IMR-90 (cell line): ENCODE measurements at regions of chr19 and their contacts with region 1.

Region 1: DNA sequence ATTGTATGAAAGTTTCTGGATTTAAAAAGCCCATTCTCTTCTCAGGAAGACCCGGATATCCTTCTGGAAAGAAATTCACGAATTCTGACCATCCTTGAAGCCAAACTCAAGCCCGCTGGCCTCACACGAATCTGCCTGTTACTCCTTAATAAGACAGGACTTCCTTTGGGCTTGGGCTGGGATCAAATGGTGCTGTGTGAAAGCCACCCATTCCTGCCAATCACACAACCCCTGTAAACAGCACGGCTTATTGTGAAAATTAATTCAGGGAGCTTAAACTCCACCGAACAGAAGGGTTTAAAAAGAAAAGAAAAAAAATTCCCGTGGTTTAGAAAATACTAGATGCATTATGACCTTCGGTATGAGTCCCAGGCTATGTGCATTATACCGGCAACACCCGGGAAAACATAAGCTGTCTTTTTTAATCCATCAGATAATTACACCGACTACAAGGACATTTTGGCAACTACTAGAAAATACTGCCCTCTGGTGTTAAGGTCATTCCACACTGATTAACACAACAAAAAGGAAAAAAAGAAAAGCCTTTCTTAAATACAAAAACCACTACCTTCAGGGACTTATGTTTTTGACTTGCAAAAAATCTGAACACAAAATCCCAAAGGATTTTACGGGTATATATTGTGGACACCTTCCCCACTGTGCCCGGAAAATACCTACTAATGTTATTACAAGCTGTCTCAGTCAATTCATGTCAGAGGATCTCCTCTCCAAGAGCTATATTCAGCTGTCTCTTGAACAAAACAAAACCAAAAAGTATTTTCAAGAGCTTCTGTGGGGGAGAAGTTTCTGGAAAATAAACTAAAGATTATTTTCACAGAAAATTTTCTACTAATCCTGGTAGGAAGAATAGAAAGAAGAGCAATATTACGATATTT is 76.0 kb upstream of the LSM14A start:
- DNase-seq: peak; percentile 50
- ATAC-seq: peak; percentile 64
- H3K4me3 ChIP-seq: no peak overlapping the region
- H3K27ac ChIP-seq: no peak overlapping the region
- H3K4me1 ChIP-seq: no peaks in the 10 kb centered on the region
- H3K27me3 ChIP-seq: peaks cover 14% of the 10 kb centered on the region
- CTCF ChIP-seq: peak; percentile 71
- POLR2A ChIP-seq: no peak
- RAD21 ChIP-seq: peak; percentile 66

Region 2: GRCh38 chr19:34041925-34042521 is 54.2 kb before region 1 on chr19:
- CTCF ChIA-PET with region 1: interaction called, 31 read pairs
- POLR2A ChIA-PET with region 1: no interaction called
- dilution Hi-C with region 1: no loop called
- in situ Hi-C with region 1: no loop called
- intact Hi-C with region 1: loop called (anchors 1 kb)
- DNase-seq: peak; percentile 33
- ATAC-seq: peak; percentile 83
- H3K4me3 ChIP-seq: no peak overlapping the region
- H3K27ac ChIP-seq: no peak overlapping the region
- H3K4me1 ChIP-seq: no peaks in the 10 kb centered on the region
- H3K27me3 ChIP-seq: no peaks in the 10 kb centered on the region; the same call in 1 of the 2 replicates
- CTCF ChIP-seq: peak; percentile 76
- POLR2A ChIP-seq: no peak
- RAD21 ChIP-seq: peak; percentile 60

Region 3: GRCh38 chr19:34082289-34083077 is 13.8 kb before region 1 on chr19:
- CTCF ChIA-PET with region 1: interaction called, 13 read pairs
- POLR2A ChIA-PET with region 1: no interaction called
- dilution Hi-C with region 1: no loop called
- in situ Hi-C with region 1: no loop called
- intact Hi-C with region 1: no loop called
- DNase-seq: no peak
- ATAC-seq: peak; percentile 87
- H3K4me3 ChIP-seq: no peak overlapping the region
- H3K27ac ChIP-seq: no peak overlapping the region
- H3K4me1 ChIP-seq: no peaks in the 10 kb centered on the region
- H3K27me3 ChIP-seq: peaks cover 6% of the 10 kb centered on the region; the same call in 1 of the 2 replicates
- CTCF ChIP-seq: no peak
- POLR2A ChIP-seq: no peak
- RAD21 ChIP-seq: no peak